GM10248 (cell line): ENCODE measurements at regions of chr6 and their contacts with region 1.

Region 1: DNA sequence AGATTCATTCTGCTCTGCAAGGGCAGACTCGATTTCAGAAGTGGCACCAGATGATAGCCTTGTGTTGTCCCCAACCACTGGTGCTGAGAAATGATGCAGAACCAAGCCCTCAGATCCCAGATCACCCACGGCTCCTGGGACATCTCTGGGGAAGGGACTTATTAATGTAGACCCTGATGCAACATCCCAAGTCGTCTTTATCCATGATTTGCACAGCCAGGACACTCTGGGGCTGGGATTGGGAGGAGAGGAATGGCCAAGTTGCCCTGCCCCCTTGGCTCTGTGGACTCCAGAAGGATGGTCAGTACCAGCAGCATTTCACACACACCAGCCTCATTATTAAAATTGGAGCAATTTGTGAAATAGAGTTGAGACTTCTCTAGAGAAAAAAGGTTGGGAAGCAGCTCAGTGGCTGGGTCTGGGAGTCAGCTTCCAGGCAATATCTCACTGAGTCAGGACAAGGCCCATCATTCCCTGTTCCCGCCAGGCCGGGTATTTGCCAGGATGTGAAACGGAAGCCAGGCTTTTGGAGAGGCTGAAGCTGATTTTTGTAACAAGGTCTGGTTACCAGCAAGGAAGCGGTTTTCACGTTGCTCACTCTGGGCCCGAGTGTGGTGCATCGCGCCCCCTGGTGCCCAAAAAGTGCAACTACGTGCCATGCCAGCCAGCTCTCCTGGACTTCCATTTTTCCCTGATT is 67.4 kb downstream of the ZBTB2 start:
- DNase-seq: peak; percentile 76
- CTCF ChIP-seq: peak; percentile 91

Region 2: GRCh38 chr6:150813319-150813992 is 510.5 kb before region 1 on chr6:
- CTCF ChIA-PET with region 1: interaction called, 85 read pairs
- POLR2A ChIA-PET with region 1: no interaction called
- DNase-seq: peak; percentile 62
- CTCF ChIP-seq: no peak

Region 3: DNA sequence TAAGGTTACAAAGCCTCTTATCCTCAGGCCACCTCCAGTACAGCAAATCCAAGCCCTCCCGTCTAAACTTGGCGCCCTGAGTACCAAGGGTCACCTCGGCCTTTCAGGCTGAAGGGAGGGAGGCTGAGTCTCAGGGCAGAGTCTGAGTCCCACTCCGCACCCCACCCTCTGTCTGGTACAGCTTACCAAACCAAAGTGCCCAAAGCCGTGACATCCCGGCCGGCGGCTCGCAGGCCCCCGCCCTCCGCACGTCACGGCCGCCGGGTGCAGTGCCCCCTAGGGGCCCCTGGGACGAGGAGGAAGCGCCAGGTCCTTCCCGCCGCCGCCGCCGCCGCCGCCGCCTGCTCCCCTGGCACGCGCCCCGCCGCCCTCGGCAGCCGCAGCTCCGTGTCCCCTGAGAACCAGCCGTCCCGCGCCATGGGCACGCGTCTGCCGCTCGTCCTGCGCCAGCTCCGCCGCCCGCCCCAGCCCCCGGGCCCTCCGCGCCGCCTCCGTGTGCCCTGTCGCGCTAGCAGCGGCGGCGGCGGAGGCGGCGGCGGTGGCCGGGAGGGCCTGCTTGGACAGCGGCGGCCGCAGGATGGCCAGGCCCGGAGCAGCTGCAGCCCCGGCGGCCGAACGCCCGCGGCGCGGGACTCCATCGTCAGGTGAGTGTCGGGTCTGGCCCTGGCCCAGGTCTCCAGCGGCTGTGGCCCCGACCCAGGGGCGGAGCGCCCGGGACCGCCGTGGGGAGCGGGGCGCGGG is 458.4 kb before region 1 on chr6 and contains the start of gene MTHFD1L:
- CTCF ChIA-PET with region 1: interaction called, 10 read pairs
- POLR2A ChIA-PET with region 1: no interaction called
- DNase-seq: peak; percentile 89
- CTCF ChIP-seq: peak; percentile 81

Region 4: DNA sequence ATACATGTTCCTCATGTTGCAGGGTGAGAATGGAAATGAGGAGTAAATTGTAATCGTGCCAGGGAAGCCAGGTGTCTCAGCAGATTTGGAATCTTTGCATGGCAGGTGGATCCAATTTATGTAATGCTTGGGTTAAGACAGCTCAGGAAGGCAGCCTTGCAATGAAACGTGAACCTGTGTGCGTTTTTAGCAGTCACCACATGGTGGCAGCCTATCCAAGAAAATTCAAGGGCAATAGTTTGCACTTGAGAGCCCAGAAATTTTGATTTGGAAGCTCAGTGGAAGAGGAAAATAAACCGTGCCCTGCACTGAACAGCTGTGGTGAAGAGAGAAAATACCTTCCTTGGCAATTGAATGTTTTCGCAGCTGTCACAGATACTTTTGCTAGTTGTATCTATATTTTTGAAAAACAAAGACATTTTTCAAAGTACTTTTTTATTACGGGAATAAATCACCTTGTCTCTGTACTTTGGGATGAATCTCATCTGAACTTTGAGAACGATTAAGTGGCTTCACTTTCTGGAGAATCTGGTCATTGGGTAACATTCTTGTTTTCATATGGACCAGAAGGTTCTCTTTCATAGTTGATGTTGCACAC is 432.0 kb before region 1 on chr6:
- CTCF ChIA-PET with region 1: interaction called, 373 read pairs
- POLR2A ChIA-PET with region 1: no interaction called
- DNase-seq: peak; percentile 45
- CTCF ChIP-seq: peak; percentile 82

Region 5: DNA sequence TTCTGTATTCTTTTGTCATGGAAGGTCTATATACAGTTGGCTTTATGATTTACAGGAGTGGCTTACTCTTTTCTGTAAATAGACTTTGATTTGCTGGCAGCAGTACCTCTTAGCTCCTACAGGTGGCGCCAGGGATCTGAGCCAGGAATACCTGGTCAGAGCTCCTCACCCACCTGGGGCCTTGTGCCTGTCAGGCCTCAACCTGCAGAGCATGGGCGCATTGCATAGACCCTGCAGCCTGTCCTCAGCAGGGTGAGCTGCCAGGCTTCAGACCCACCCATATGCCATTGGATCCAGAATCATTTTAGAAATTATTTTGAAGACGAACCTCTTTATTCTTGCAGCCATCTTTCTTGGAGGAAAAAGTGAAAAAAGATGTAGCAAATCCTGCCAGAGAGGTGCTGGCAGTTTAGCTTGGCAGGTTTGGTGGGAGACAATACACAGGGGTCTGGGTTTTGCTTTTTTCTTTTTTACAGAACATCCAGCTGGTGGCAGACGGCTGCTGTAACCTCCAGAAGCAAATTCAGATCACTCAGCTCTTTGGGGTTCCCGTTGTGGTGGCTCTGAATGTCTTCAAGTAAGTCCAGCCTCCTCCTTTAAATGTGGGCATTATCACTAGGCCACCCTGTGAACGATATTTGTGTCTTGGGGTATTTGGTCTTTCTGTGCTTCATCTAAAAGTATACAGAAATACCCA is 309.4 kb before region 1 on chr6:
- CTCF ChIA-PET with region 1: interaction called, 197 read pairs
- POLR2A ChIA-PET with region 1: no interaction called
- DNase-seq: peak; percentile 62
- CTCF ChIP-seq: peak; percentile 87

Region 6: GRCh38 chr6:151136141-151136755 is 187.7 kb before region 1 on chr6:
- CTCF ChIA-PET with region 1: no interaction called
- POLR2A ChIA-PET with region 1: no interaction called
- DNase-seq: no peak
- CTCF ChIP-seq: no peak

Region 7: GRCh38 chr6:151310852-151311767 is 12.8 kb before region 1 on chr6:
- CTCF ChIA-PET with region 1: interaction called, 30 read pairs
- POLR2A ChIA-PET with region 1: no interaction called
- DNase-seq: no peak
- CTCF ChIP-seq: no peak

Region 8: GRCh38 chr6:151349651-151350282 is 25.8 kb after region 1 on chr6:
- CTCF ChIA-PET with region 1: interaction called, 10 read pairs
- POLR2A ChIA-PET with region 1: no interaction called
- DNase-seq: no peak
- CTCF ChIP-seq: no peak

Region 9: DNA sequence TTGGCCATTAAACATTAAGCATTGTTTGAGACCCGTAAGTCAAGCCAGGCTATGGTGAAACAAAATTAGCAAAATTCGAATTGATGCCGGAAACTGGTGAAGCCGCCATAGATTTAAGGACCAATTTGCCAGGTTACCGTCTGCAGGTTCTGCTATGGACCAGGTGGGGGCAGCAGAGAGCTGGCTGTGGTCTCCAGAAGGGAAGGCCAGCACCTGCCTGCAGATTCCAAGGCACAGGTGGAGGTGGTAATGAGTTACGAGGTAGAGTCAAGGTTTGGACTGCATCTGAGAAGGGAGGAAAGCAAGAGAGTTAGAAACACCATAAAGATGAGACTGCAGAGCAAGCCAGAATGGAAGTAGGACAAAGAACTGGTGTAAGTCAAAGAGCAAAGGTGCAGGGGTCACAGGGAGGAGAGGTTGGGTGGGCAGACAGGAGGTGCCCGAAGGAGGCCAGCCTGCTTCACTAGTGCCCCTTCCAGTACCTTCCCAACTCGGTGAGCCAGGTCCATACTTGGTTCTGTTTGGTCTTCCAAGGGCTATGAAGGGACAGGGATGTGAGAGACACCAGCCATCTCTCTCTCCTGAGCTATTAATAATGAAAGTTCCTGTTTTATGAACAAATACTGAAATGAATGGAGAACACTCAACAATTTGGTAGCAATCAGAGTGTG is 351.9 kb after region 1 on chr6:
- CTCF ChIA-PET with region 1: no interaction called
- POLR2A ChIA-PET with region 1: no interaction called
- DNase-seq: peak; percentile 69
- CTCF ChIP-seq: peak; percentile 79